ENCODE measurements at regions of chr1 and their contacts with region 1.

Region 1: GRCh38 chr1:36149237-36149972 is at the start of gene TRAPPC3:
- DNase-seq: peak; percentile 100
- H3K4me3 Mint-ChIP-seq: peak within 1 kb of the TSS; percentile 98
- H3K27ac Mint-ChIP-seq: peak within 1 kb of the TSS; percentile 98
- H3K4me1 Mint-ChIP-seq: peaks cover 54% of the 10 kb centered on the region
- H3K27me3 Mint-ChIP-seq: no peaks in the 10 kb centered on the region
- total RNA-seq, gene TRAPPC3: 71.2 and 72.4 TPM in 2 replicates

Region 2: DNA sequence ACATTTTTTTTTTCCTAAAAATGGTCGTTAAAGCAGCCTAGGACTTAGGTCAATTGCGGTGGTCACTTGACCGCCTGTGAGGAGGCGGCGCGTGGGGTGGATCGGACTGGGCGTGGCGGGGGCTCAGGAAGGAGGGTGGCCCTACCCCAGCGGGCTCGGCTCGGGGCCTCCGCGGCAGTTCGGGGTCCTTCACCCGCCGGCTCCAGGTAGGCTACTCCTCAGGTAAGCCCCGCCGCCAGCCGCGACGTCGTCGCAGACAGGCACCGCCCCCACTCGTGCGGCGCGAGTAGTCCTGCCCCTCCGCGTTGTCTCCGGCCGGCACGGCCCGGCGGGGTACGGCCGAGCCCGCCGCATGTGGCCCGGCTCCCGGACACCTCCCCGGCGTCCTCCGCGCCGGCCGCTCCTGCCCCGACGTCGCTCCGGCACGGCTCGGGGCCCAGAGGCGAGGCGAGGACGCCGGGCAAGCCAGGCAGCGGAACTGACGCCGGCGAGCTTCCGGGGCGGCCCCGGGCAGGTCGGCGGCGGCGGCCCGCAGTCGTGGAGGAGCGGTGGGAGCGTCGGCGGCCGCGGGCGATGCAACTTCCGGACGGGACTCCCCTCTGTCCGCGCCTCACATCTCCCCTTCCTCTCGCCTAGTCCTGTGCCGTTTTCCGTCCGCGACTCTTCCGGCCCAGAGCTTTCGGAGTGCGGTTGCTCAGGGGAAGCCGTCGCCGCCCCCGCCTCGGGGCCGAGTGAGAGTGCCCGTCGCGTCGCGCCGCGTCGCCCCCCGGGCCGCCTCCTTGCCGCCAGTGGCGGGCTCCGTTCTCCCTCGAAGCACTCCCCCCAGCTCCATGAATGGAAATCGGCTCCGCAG is 218.6 kb before region 1 on chr1 and contains the start of gene AGO3:
- intact Hi-C with region 1: loop called (anchors 1 kb)
- DNase-seq: peak; percentile 96
- H3K4me3 Mint-ChIP-seq: peak within 1 kb of the TSS; percentile 94
- H3K27ac Mint-ChIP-seq: peak within 1 kb of the TSS; percentile 95
- H3K4me1 Mint-ChIP-seq: peaks cover 22% of the 10 kb centered on the region
- H3K27me3 Mint-ChIP-seq: no peaks in the 10 kb centered on the region
- total RNA-seq, gene AGO3: 25.9 and 32.1 TPM in 2 replicates

Region 3: GRCh38 chr1:36109041-36109679 is 40.2 kb before region 1 on chr1:
- intact Hi-C with region 1: no loop called
- DNase-seq: peak; percentile 82
- H3K4me3 Mint-ChIP-seq: no peak overlapping the region
- H3K27ac Mint-ChIP-seq: peak overlapping the region; percentile 74
- H3K4me1 Mint-ChIP-seq: peaks cover 14% of the 10 kb centered on the region
- H3K27me3 Mint-ChIP-seq: no peaks in the 10 kb centered on the region

Region 4: GRCh38 chr1:36160949-36161485 is 11.6 kb after region 1 on chr1:
- intact Hi-C with region 1: loop called (anchors 1 kb)
- DNase-seq: peak; percentile 91
- H3K4me3 Mint-ChIP-seq: peak overlapping the region; percentile 88
- H3K27ac Mint-ChIP-seq: peak overlapping the region; percentile 99
- H3K4me1 Mint-ChIP-seq: peaks cover 62% of the 10 kb centered on the region
- H3K27me3 Mint-ChIP-seq: no peaks in the 10 kb centered on the region

Region 5: GRCh38 chr1:36223993-36224536 is 74.7 kb after region 1 on chr1 and contains the start of gene THRAP3:
- intact Hi-C with region 1: loop called (anchors 1 kb)
- DNase-seq: peak; percentile 100
- H3K4me3 Mint-ChIP-seq: peak within 1 kb of the TSS; percentile 97
- H3K27ac Mint-ChIP-seq: peak within 1 kb of the TSS; percentile 100
- H3K4me1 Mint-ChIP-seq: peaks cover 29% of the 10 kb centered on the region
- H3K27me3 Mint-ChIP-seq: no peaks in the 10 kb centered on the region
- total RNA-seq, gene THRAP3: 157 and 161 TPM in 2 replicates

Region 6: GRCh38 chr1:36420836-36421664 is 271.6 kb after region 1 on chr1:
- intact Hi-C with region 1: loop called (anchors 1 kb)
- DNase-seq: peak; percentile 98
- H3K4me3 Mint-ChIP-seq: peak overlapping the region; percentile 26
- H3K27ac Mint-ChIP-seq: peak overlapping the region; percentile 64
- H3K4me1 Mint-ChIP-seq: peaks cover 13% of the 10 kb centered on the region
- H3K27me3 Mint-ChIP-seq: no peaks in the 10 kb centered on the region

Region 7: GRCh38 chr1:36446271-36446670 is 296.9 kb after region 1 on chr1:
- intact Hi-C with region 1: no loop called
- DNase-seq: peak; percentile 77
- H3K4me3 Mint-ChIP-seq: no peak overlapping the region
- H3K27ac Mint-ChIP-seq: no peak overlapping the region
- H3K4me1 Mint-ChIP-seq: peaks cover 15% of the 10 kb centered on the region
- H3K27me3 Mint-ChIP-seq: peaks cover 6% of the 10 kb centered on the region